ENCODE measurements at regions of chr1 and their contacts with region 1.

Region 1: GRCh38 chr1:31394628-31395193 is 18.3 kb upstream of the SERINC2 start:
- DNase-seq: peak; percentile 93 to 95
- H3K4me3 ChIP-seq: peak overlapping the region; percentile 24 to 39 (median 32)
- H3K27ac ChIP-seq: no peak overlapping the region
- H3K4me1 ChIP-seq: peaks cover 5 to 14% (median 12%) of the 10 kb centered on the region in 4 donors
- H3K27me3 ChIP-seq: peaks cover 0 to 5% (median 0%) of the 10 kb centered on the region in 3 donors
- CTCF ChIP-seq: peak in 5 of 7 experiments; percentile 75 to 88 (median 84)
- EP300 ChIP-seq: no peak
- POLR2A ChIP-seq: no peak

Region 2: DNA sequence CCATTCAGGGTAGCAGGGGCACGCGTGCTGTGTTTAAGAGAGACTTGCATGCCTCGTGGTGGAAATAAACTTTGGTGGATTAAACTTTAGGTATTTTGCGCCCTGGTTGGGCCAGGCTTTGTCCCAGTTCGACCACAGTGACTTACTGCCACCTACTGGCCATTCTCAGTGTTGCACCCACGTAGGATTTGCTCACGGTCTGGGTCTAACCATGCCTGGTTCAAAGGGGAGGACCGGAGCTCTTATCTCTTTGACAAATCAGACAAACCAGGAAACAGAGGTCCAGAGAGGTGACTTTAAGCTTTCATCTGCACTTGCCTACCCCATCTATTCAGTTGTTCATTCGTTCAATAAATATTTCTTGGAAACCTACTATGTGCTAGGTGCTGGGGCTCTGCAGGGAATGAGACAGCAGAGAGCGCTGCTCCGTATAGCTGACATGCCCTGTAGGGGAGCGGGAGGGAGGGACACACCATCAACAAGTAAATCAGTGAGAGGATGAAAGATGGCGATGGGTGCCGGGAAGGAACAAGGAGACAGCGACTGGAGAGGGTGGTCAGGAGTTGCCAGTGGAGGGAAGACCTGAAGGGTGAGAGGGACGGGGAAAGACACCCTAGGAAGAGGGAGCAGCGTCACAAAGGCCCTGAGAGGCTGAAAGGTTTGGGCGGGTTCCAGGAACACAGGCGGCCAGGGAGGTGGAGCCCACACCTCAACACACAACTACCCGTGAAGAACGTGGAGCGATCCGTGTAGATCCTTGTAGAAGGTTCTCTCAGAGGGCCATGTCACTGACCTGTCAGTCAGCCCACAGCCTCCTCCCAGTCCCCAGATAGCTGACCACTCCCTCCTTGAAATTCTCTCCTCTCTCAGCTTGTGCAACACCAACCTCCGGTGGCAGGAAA is 154.4 kb after region 1 on chr1:
- intact Hi-C with region 1: loop called (anchors 5 kb)
- DNase-seq: peak; percentile 95 to 96
- H3K4me3 ChIP-seq: peak overlapping the region in 3 of 4 donors; percentile 4 to 20 (median 10)
- H3K27ac ChIP-seq: peak overlapping the region in 3 of 5 donors; percentile 2 to 21 (median 2)
- H3K4me1 ChIP-seq: peaks cover 13 to 20% (median 16%) of the 10 kb centered on the region in 4 donors
- H3K27me3 ChIP-seq: peaks cover 0 to 23% (median 0%) of the 10 kb centered on the region in 3 donors
- CTCF ChIP-seq: peak in 6 of 7 experiments; percentile 47 to 96 (median 94)
- EP300 ChIP-seq: no peak
- POLR2A ChIP-seq: no peak